H1 (cell line): ENCODE measurements at regions of chr1 and their contacts with region 1.

Region 1: GRCh38 chr1:195733826-195734225 is 874.4 kb downstream of the KCNT2 start:
- DNase-seq: peak in 1 of 2 experiments; percentile 19
- H3K4me3 ChIP-seq: no peak overlapping the region
- H3K27ac ChIP-seq: no peak overlapping the region
- H3K4me1 ChIP-seq: no peaks in the 10 kb centered on the region
- H3K27me3 ChIP-seq: no peaks in the 10 kb centered on the region
- CTCF ChIP-seq: peak in 2 of 3 experiments; percentile 41 to 63; a peak in 3 of 4 replicates
- EP300 ChIP-seq: no peak
- POLR2A ChIP-seq: no peak
- RAD21 ChIP-seq: peak; percentile 44 to 49

Region 2: GRCh38 chr1:195721210-195721971 is 12.4 kb before region 1 on chr1:
- CTCF ChIA-PET with region 1: interaction called, 20 read pairs
- POLR2A ChIA-PET with region 1: no interaction called
- DNase-seq: no peak
- H3K4me3 ChIP-seq: no peak overlapping the region
- H3K27ac ChIP-seq: no peak overlapping the region
- H3K4me1 ChIP-seq: no peaks in the 10 kb centered on the region
- H3K27me3 ChIP-seq: no peaks in the 10 kb centered on the region
- CTCF ChIP-seq: no peak
- EP300 ChIP-seq: no peak
- POLR2A ChIP-seq: no peak
- RAD21 ChIP-seq: no peak